Heart right ventricle (tissue), 16 donors: ENCODE measurements at regions of chr2 and their contacts with region 1.

Region 1: GRCh38 chr2:58448065-58448507 is 207.0 kb upstream of the FANCL start:
- DNase-seq: peak in 1 of 2 donors; percentile 51
- ATAC-seq: peak in 5 of 8 donors; percentile 40 to 82 (median 55)
- H3K4me3 ChIP-seq: no peak overlapping the region
- H3K27ac ChIP-seq: no peak overlapping the region
- H3K4me1 ChIP-seq: no peaks in the 10 kb centered on the region
- H3K27me3 ChIP-seq: peaks cover 0 to 19% (median 0%) of the 10 kb centered on the region in 7 donors
- CTCF ChIP-seq: peak in 8 of 9 donors; percentile 8 to 66 (median 51)

Region 2: DNA sequence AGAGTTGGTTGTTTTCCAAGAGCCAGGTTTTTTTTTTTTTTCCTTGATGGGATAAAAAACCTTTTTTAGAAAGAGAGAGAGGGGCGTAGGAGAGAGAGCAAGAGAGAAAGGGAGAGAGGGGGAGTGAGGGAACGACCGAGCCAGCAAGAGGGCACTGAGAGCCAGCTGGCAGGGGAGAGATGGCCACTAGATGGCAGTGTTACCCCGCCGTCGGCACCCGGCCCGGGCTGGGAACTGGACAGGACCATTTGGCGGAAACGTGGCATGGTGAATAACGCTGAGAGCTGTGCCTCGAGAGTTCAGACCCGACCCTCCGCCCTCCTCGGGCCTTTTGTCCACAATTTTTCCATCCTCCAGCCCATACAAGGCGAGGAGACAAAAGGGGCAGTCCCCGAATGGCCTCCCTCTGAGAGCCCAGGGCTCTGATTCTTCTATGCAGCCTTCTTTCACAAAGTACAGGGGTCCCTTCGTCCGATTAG is 688.2 kb before region 1 on chr2:
- intact Hi-C with region 1: loop called in 2 of 10 experiments (anchors 5 kb)
- DNase-seq: peak; percentile 76 to 83
- ATAC-seq: peak; percentile 88 to 99 (median 97)
- H3K4me3 ChIP-seq: peak overlapping the region in 6 of 10 donors; percentile 25 to 39 (median 35)
- H3K27ac ChIP-seq: no peak overlapping the region
- H3K4me1 ChIP-seq: peaks cover 0 to 15% (median 11%) of the 10 kb centered on the region in 9 donors
- H3K27me3 ChIP-seq: no peaks in the 10 kb centered on the region
- CTCF ChIP-seq: peak; percentile 90 to 98 (median 97)

Region 3: GRCh38 chr2:57899898-57900297 is 548.2 kb before region 1 on chr2:
- intact Hi-C with region 1: loop called in 8 of 10 experiments (anchors 2 to 10 kb)
- DNase-seq: no peak
- ATAC-seq: no peak
- H3K4me3 ChIP-seq: no peak overlapping the region
- H3K27ac ChIP-seq: no peak overlapping the region
- H3K4me1 ChIP-seq: no peaks in the 10 kb centered on the region
- H3K27me3 ChIP-seq: no peaks in the 10 kb centered on the region
- CTCF ChIP-seq: no peak

Region 4: GRCh38 chr2:57906152-57906732 is 541.8 kb before region 1 on chr2:
- intact Hi-C with region 1: loop called in 8 of 10 experiments (anchors 2 to 10 kb)
- DNase-seq: no peak
- ATAC-seq: peak in 6 of 8 donors; percentile 61 to 84 (median 78)
- H3K4me3 ChIP-seq: no peak overlapping the region
- H3K27ac ChIP-seq: no peak overlapping the region
- H3K4me1 ChIP-seq: peaks cover 0 to 20% (median 0%) of the 10 kb centered on the region in 9 donors
- H3K27me3 ChIP-seq: no peaks in the 10 kb centered on the region
- CTCF ChIP-seq: peak; percentile 57 to 90 (median 78)

Region 5: DNA sequence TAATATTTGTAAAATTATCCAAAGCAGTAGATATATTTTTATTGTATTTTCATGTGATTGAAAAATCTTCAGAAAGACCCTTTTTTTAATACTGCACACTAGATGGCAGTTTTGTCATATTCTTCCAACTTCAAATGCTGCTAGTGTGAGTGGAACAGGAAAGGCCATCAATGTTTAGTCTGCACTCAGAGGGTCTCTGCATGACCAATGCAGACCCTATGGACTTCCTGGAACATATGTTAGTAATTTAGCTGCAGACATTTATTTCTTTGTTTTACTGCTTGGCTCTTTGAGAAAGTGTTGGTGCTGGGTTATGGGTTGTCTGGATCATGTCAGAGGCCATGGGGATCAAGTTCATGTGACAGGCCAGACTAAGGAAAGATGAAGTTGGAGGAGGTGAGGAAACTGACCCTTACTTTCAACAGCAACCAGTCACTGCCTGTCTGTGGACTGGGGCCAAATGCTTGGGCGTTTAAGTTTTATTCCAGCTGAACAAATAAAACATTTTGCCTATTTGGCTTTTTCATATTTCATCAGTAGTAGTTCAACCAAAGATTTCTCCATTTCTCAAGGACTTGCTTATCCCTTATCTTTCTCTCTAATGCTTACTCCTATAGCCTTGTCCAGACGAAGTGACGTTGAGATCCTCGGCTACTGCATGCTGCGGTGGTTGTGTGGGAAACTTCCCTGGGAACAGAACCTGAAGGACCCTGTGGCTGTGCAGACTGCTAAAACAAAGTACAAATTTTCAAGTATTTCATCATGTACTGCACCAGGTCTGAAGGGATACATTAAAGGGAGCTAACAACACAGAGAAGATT is 316.7 kb before region 1 on chr2:
- intact Hi-C with region 1: loop called in 1 of 10 experiments (anchors 10 kb)
- DNase-seq: peak; percentile 16 to 23
- ATAC-seq: peak in 7 of 8 donors; percentile 33 to 62 (median 58)
- H3K4me3 ChIP-seq: no peak overlapping the region
- H3K27ac ChIP-seq: peak overlapping the region in 2 of 10 donors; percentile 5 to 25
- H3K4me1 ChIP-seq: peaks cover 0 to 25% (median 0%) of the 10 kb centered on the region in 9 donors
- H3K27me3 ChIP-seq: no peaks in the 10 kb centered on the region
- CTCF ChIP-seq: peak in 6 of 9 donors; percentile 7 to 49 (median 34)

Region 6: DNA sequence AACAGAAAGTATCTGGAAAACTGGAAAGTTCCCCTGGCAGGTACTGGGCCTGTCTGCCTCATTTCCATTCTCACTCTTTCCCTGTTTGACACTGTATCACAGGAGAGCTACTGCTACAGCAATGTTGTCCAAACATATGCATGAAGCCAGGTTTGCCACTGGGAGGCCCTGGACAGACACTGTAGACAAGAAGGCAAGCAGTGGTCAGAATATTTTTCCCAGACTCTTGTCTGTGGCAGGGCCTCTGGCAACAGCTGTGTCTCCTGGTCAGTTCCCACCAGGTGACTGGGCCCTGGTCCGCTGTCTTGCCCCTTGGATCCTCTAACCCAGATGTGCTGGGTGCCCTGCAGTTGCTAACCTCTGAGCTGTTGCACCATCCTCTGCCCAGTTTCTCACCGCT is 28.1 kb before region 1 on chr2:
- intact Hi-C with region 1: no loop called
- DNase-seq: no peak
- ATAC-seq: no peak
- H3K4me3 ChIP-seq: no peak overlapping the region
- H3K27ac ChIP-seq: no peak overlapping the region
- H3K4me1 ChIP-seq: no peaks in the 10 kb centered on the region
- H3K27me3 ChIP-seq: peaks cover 0 to 16% (median 10%) of the 10 kb centered on the region in 7 donors
- CTCF ChIP-seq: no peak

Region 7: GRCh38 chr2:58494071-58494501 is 46.0 kb after region 1 on chr2:
- intact Hi-C with region 1: no loop called
- DNase-seq: no peak
- ATAC-seq: no peak
- H3K4me3 ChIP-seq: no peak overlapping the region
- H3K27ac ChIP-seq: no peak overlapping the region
- H3K4me1 ChIP-seq: no peaks in the 10 kb centered on the region
- H3K27me3 ChIP-seq: no peaks in the 10 kb centered on the region
- CTCF ChIP-seq: no peak

Region 8: GRCh38 chr2:60064687-60065389 is 1616.8 kb after region 1 on chr2:
- intact Hi-C with region 1: no loop called
- DNase-seq: no peak
- ATAC-seq: peak in 7 of 8 donors; percentile 29 to 94 (median 77)
- H3K4me3 ChIP-seq: no peak overlapping the region
- H3K27ac ChIP-seq: peak overlapping the region in 3 of 10 donors; percentile 29 to 32 (median 31)
- H3K4me1 ChIP-seq: peaks cover 0 to 18% (median 0%) of the 10 kb centered on the region in 9 donors
- H3K27me3 ChIP-seq: no peaks in the 10 kb centered on the region
- CTCF ChIP-seq: no peak